ENCODE measurements at regions of chr7 and their contacts with region 1.

Region 1: GRCh38 chr7:132029369-132030085 is 473.1 kb upstream of the PODXL start:
- DNase-seq: peak in 1 of 4 donors; percentile 21
- ATAC-seq: no peak
- H3K4me3 ChIP-seq: no peak overlapping the region
- H3K27ac ChIP-seq: no peak overlapping the region
- H3K4me1 ChIP-seq: peaks cover 19% of the 10 kb centered on the region
- H3K27me3 ChIP-seq: no peaks in the 10 kb centered on the region
- CTCF ChIP-seq: no peak
- POLR2A ChIP-seq: no peak

Region 2: DNA sequence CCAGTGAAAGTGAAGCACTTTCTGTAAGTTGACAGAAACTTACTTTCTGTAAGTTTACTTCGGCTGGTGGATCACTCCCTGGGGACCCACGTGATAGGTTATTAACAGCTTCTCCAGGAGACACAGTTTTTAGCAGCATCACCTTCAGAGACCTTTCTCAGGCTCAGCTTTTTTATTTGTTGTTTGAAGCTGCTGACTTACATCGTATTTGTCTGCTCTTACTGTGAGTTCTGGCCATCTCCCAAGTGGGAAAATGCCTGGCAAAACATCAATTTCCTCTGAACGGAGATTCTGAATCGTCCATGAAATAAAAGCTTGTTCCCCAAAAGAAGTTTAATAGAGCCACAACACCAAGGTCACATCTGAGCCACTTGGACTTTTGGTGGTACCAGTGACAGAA is 294.4 kb before region 1 on chr7:
- intact Hi-C with region 1: no loop called
- DNase-seq: no peak
- ATAC-seq: no peak
- H3K4me3 ChIP-seq: no peak overlapping the region
- H3K27ac ChIP-seq: no peak overlapping the region
- H3K4me1 ChIP-seq: no peaks in the 10 kb centered on the region
- H3K27me3 ChIP-seq: no peaks in the 10 kb centered on the region
- CTCF ChIP-seq: no peak
- POLR2A ChIP-seq: no peak

Region 3: GRCh38 chr7:132206594-132206993 is 177.1 kb after region 1 on chr7:
- intact Hi-C with region 1: loop called (anchors 10 kb)
- DNase-seq: no peak
- ATAC-seq: no peak
- H3K4me3 ChIP-seq: no peak overlapping the region
- H3K27ac ChIP-seq: no peak overlapping the region
- H3K4me1 ChIP-seq: peaks cover 5% of the 10 kb centered on the region
- H3K27me3 ChIP-seq: no peaks in the 10 kb centered on the region
- CTCF ChIP-seq: no peak
- POLR2A ChIP-seq: no peak

Measured in body of pancreas (tissue), 4 donors.